B cell (primary cell): ENCODE measurements at regions of chr19 and their contacts with region 1.

Region 1: GRCh38 chr19:13861732-13862531 is 15.0 kb upstream of the NANOS3 start:
- DNase-seq: peak; percentile 92
- ATAC-seq: peak; percentile 83
- H3K4me3 ChIP-seq: peak overlapping the region; percentile 50 to 69 (median 61)
- H3K4me3 Mint-ChIP-seq: peak overlapping the region; percentile 91
- H3K27ac ChIP-seq: peak overlapping the region; percentile 34 to 78
- H3K27ac Mint-ChIP-seq: peak overlapping the region; percentile 85
- H3K4me1 ChIP-seq: peaks cover 26 to 28% of the 10 kb centered on the region in 2 donors
- H3K4me1 Mint-ChIP-seq: peaks cover 29% of the 10 kb centered on the region
- H3K27me3 ChIP-seq: peaks cover 0 to 34% (median 17%) of the 10 kb centered on the region in 4 experiments
- H3K27me3 Mint-ChIP-seq: peaks cover 25% of the 10 kb centered on the region
- CTCF ChIP-seq: peak; percentile 97

Region 2: GRCh38 chr19:13597640-13598039 is 264.3 kb before region 1 on chr19:
- CTCF ChIA-PET with region 1: interaction called, 29 read pairs
- POLR2A ChIA-PET with region 1: interaction called, 3 read pairs
- intact Hi-C with region 1: no loop called
- DNase-seq: peak; percentile 78
- ATAC-seq: peak; percentile 88
- H3K4me3 ChIP-seq: no peak overlapping the region
- H3K4me3 Mint-ChIP-seq: no peak overlapping the region
- H3K27ac ChIP-seq: no peak overlapping the region
- H3K27ac Mint-ChIP-seq: peak overlapping the region; percentile 6
- H3K4me1 ChIP-seq: no peaks in the 10 kb centered on the region
- H3K4me1 Mint-ChIP-seq: no peaks in the 10 kb centered on the region
- H3K27me3 ChIP-seq: peaks cover 0 to 7% (median 1%) of the 10 kb centered on the region in 4 experiments
- H3K27me3 Mint-ChIP-seq: peaks cover 26% of the 10 kb centered on the region
- CTCF ChIP-seq: peak; percentile 61

Region 3: DNA sequence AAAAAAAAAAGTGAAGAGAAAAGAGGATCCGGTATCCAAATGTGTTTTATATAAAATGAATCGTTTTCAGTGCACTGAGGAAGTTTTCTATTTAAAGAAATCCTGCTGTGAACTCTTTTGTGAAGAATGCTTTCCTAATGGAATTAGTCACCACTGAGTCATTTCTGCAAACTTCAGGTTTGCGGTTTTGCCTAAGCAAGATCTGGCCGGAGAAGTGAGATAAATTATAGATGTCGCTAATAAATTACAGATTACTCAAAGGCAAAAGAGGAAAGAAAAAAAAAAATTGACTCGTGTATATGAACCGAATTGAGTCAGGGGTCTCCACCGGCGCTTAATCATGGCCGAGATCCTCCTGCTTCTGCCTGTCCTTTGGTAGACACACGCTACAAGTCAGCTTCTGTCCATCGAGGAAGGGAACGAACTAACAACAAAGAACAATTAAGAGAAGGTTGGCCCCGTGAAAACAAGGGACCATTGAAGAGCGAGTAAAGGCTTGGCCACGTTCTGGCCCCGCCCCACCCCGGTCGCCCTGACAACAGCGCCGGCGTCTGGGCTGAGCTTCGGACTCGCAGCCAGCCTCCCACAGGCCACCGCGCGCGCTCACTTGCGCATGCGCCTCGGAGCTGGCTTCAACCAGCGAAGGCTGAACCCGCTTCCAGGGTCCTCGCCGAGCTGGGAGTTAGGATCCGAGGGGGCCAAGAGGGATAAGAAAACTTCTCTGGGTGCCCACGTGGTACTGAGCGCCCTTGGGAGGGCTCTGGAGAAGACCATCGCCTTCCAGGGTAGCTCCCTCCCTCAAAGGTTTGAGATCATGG is 130.6 kb before region 1 on chr19:
- CTCF ChIA-PET with region 1: interaction called, 11 read pairs
- POLR2A ChIA-PET with region 1: no interaction called
- intact Hi-C with region 1: no loop called
- DNase-seq: peak; percentile 94
- ATAC-seq: peak; percentile 100
- H3K4me3 ChIP-seq: peak overlapping the region; percentile 51 to 80 (median 72)
- H3K4me3 Mint-ChIP-seq: peak overlapping the region; percentile 94
- H3K27ac ChIP-seq: peak overlapping the region; percentile 28 to 49
- H3K27ac Mint-ChIP-seq: peak overlapping the region; percentile 91
- H3K4me1 ChIP-seq: peaks cover 6 to 22% of the 10 kb centered on the region in 2 donors
- H3K4me1 Mint-ChIP-seq: peaks cover 19% of the 10 kb centered on the region
- H3K27me3 ChIP-seq: no peaks in the 10 kb centered on the region
- H3K27me3 Mint-ChIP-seq: no peaks in the 10 kb centered on the region
- CTCF ChIP-seq: no peak

Region 4: GRCh38 chr19:13774217-13775191 is 87.4 kb before region 1 on chr19 and contains the start of gene C19orf53:
- CTCF ChIA-PET with region 1: interaction called, 16 read pairs
- POLR2A ChIA-PET with region 1: interaction called, 10 read pairs
- intact Hi-C with region 1: no loop called
- DNase-seq: peak; percentile 91
- ATAC-seq: peak; percentile 100
- H3K4me3 ChIP-seq: peak within 1 kb of the TSS; percentile 51 to 96 (median 85)
- H3K4me3 Mint-ChIP-seq: peak within 1 kb of the TSS; percentile 97
- H3K27ac ChIP-seq: peak within 1 kb of the TSS; percentile 79 to 82
- H3K27ac Mint-ChIP-seq: peak within 1 kb of the TSS; percentile 94
- H3K4me1 ChIP-seq: peaks cover 10 to 14% of the 10 kb centered on the region in 2 donors
- H3K4me1 Mint-ChIP-seq: peaks cover 25% of the 10 kb centered on the region
- H3K27me3 ChIP-seq: no peaks in the 10 kb centered on the region
- H3K27me3 Mint-ChIP-seq: no peaks in the 10 kb centered on the region
- CTCF ChIP-seq: no peak
- total RNA-seq, gene C19orf53: 59.2 and 62.5 TPM in 2 replicates

Region 5: GRCh38 chr19:13794757-13795589 is 67.0 kb before region 1 on chr19 and contains the start of gene ZSWIM4:
- CTCF ChIA-PET with region 1: interaction called, 250 read pairs
- POLR2A ChIA-PET with region 1: interaction called, 8 read pairs
- intact Hi-C with region 1: no loop called
- DNase-seq: peak; percentile 97
- ATAC-seq: peak; percentile 95
- H3K4me3 ChIP-seq: peak within 1 kb of the TSS; percentile 44 to 81 (median 68)
- H3K4me3 Mint-ChIP-seq: peak within 1 kb of the TSS; percentile 98
- H3K27ac ChIP-seq: peak within 1 kb of the TSS; percentile 58 to 82
- H3K27ac Mint-ChIP-seq: peak within 1 kb of the TSS; percentile 95
- H3K4me1 ChIP-seq: peaks cover 21 to 26% of the 10 kb centered on the region in 2 donors
- H3K4me1 Mint-ChIP-seq: peaks cover 36% of the 10 kb centered on the region
- H3K27me3 ChIP-seq: no peaks in the 10 kb centered on the region
- H3K27me3 Mint-ChIP-seq: no peaks in the 10 kb centered on the region
- CTCF ChIP-seq: no peak
- total RNA-seq, gene ZSWIM4: 10.1 and 10.6 TPM in 2 replicates

Region 6: DNA sequence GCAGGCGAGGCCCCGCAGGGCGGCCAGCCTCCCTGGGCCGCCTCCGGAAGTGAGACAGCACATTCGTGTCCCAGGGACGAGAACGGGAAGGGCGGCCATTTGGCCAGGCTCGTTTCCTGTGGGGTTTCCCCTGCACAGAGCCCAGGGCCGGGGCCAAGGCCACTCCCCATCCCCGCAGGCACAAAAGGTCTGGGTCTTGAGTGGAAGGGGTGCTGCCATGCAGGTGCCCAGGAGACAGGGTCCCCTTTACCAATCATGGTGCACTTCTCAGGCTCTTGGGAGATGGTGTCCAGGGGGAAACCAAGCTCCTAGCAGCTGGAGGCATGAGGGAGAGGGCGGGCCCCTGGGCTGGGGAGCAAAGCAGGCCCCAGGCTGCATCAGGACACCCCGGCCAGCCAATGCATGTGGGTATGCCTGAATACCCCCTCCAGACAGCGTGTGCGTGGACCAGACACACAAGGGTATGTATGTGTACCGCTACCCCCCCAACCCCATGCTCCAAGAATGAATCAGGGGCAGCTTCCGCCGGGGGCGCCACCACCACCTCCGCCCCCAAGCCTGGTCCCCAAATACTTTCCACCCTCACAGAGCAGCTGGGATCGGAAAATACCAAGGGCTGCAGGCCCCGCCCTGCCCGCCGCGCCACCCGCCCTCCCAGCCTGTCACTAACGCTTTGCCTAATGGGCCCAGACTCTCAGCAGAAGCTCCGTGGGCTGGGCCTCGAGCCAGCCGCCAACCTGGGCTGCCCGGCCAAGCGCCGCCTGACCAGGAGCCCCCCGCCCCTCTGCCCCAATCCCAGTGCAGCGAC is 22.6 kb before region 1 on chr19:
- CTCF ChIA-PET with region 1: interaction called, 40 read pairs
- POLR2A ChIA-PET with region 1: interaction called, 8 read pairs
- intact Hi-C with region 1: loop called (anchors 1 kb)
- DNase-seq: peak; percentile 82
- ATAC-seq: peak; percentile 44
- H3K4me3 ChIP-seq: peak overlapping the region; percentile 1 to 75 (median 62)
- H3K4me3 Mint-ChIP-seq: peak overlapping the region; percentile 88
- H3K27ac ChIP-seq: peak overlapping the region; percentile 93 to 94
- H3K27ac Mint-ChIP-seq: peak overlapping the region; percentile 95
- H3K4me1 ChIP-seq: peaks cover 76 to 83% of the 10 kb centered on the region in 2 donors
- H3K4me1 Mint-ChIP-seq: peaks cover 66% of the 10 kb centered on the region
- H3K27me3 ChIP-seq: no peaks in the 10 kb centered on the region
- H3K27me3 Mint-ChIP-seq: no peaks in the 10 kb centered on the region
- CTCF ChIP-seq: no peak

Region 7: GRCh38 chr19:13872695-13873389 is 10.9 kb after region 1 on chr19:
- CTCF ChIA-PET with region 1: interaction called, 14 read pairs
- POLR2A ChIA-PET with region 1: interaction called, 3 read pairs
- intact Hi-C with region 1: no loop called
- DNase-seq: peak; percentile 67
- ATAC-seq: peak; percentile 83
- H3K4me3 ChIP-seq: peak overlapping the region in 4 of 5 experiments; percentile 13 to 63 (median 37)
- H3K4me3 Mint-ChIP-seq: peak overlapping the region; percentile 83
- H3K27ac ChIP-seq: no peak overlapping the region
- H3K27ac Mint-ChIP-seq: no peak overlapping the region
- H3K4me1 ChIP-seq: peaks cover 12 to 13% of the 10 kb centered on the region in 2 donors
- H3K4me1 Mint-ChIP-seq: peaks cover 7% of the 10 kb centered on the region
- H3K27me3 ChIP-seq: peaks cover 0 to 59% (median 2%) of the 10 kb centered on the region in 4 experiments
- H3K27me3 Mint-ChIP-seq: peaks cover 27% of the 10 kb centered on the region
- CTCF ChIP-seq: no peak

Region 8: DNA sequence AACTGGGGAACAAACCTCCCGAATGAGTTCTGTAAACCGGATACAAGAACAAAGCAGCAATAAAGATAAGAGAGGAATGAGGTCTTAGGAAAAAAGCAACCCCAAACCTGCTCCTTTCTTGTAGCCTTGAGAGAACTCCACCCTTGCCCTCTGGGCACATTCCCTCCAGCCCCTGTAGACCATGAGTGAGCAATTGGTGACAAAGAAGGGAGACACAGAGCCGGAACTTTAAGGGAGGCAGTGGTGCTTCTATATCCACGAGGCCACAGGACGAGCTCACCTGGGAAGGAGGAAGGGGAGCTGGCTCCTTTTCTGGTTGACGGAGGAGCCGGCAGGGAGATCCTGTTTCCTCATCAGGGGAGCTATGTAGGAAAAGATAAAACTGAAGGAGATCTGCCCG is 30.9 kb after region 1 on chr19:
- CTCF ChIA-PET with region 1: no interaction called
- POLR2A ChIA-PET with region 1: no interaction called
- intact Hi-C with region 1: no loop called
- DNase-seq: no peak
- ATAC-seq: no peak
- H3K4me3 ChIP-seq: no peak overlapping the region
- H3K4me3 Mint-ChIP-seq: no peak overlapping the region
- H3K27ac ChIP-seq: no peak overlapping the region
- H3K27ac Mint-ChIP-seq: no peak overlapping the region
- H3K4me1 ChIP-seq: no peaks in the 10 kb centered on the region
- H3K4me1 Mint-ChIP-seq: no peaks in the 10 kb centered on the region
- H3K27me3 ChIP-seq: no peaks in the 10 kb centered on the region
- H3K27me3 Mint-ChIP-seq: no peaks in the 10 kb centered on the region
- CTCF ChIP-seq: no peak

Region 9: DNA sequence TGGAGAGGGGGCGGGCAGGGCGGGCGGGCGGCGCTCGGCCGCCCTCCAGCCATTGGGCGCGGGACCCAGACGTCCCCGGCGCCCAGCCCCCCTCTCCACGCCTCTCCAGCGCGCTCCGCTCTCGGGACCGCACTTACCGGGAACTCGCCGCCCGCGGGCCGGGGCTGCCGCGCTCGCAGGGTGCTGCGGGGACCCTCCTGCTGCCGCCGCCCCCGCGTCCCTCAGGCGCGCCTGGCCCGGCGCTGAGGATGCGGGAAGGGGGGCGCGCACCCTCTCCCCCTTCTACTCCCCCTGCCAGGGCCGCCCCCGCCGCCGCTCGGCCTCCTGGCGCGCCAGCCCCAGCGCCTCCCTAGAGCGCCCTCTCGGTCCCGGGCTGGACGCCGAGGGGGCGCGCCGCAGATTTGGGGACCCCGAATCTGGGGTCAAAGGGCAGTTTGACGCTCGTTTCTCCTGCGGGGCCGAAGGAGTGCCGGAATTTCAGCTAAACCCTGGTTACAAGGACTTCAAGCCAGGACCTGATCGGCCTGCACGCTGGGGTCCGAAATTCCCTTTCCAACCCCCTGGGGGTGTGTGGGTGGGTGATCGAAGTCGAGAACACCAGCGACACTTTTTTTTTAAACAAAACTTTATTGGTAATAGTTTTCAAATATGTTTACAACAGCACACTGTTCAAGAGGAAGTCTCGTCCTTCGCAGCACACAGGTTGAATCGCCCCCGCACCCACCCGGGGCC is 229.3 kb after region 1 on chr19:
- CTCF ChIA-PET with region 1: no interaction called
- POLR2A ChIA-PET with region 1: no interaction called
- intact Hi-C with region 1: no loop called
- DNase-seq: peak; percentile 89
- ATAC-seq: peak; percentile 72
- H3K4me3 ChIP-seq: peak overlapping the region; percentile 81 to 89 (median 82)
- H3K4me3 Mint-ChIP-seq: peak overlapping the region; percentile 100
- H3K27ac ChIP-seq: peak overlapping the region; percentile 69 to 87
- H3K27ac Mint-ChIP-seq: peak overlapping the region; percentile 99
- H3K4me1 ChIP-seq: peaks cover 11 to 18% of the 10 kb centered on the region in 2 donors
- H3K4me1 Mint-ChIP-seq: peaks cover 15% of the 10 kb centered on the region
- H3K27me3 ChIP-seq: no peaks in the 10 kb centered on the region
- H3K27me3 Mint-ChIP-seq: no peaks in the 10 kb centered on the region
- CTCF ChIP-seq: peak; percentile 21